Activated CD4-positive, alpha-beta T cell treated with anti-CD3 and anti-CD28 coated beads for 36 hours (primary cell): ENCODE measurements at regions of chr11 and their contacts with region 1.

Region 1: GRCh38 chr11:93084727-93085505 is 112.9 kb downstream of the SLC36A4 start:
- DNase-seq: no peak
- ATAC-seq: no peak
- H3K4me3 Mint-ChIP-seq: no peak overlapping the region
- H3K27ac Mint-ChIP-seq: no peak overlapping the region
- H3K4me1 Mint-ChIP-seq: no peaks in the 10 kb centered on the region
- H3K27me3 Mint-ChIP-seq: peaks cover 8% of the 10 kb centered on the region

Region 2: GRCh38 chr11:93225662-93226061 is 140.7 kb after region 1 on chr11:
- CTCF ChIA-PET with region 1: interaction called, 3 read pairs
- POLR2A ChIA-PET with region 1: no interaction called
- intact Hi-C with region 1: loop called in 1 of 2 experiments (anchors 5 kb)
- DNase-seq: no peak
- ATAC-seq: no peak
- H3K4me3 Mint-ChIP-seq: no peak overlapping the region
- H3K27ac Mint-ChIP-seq: no peak overlapping the region
- H3K4me1 Mint-ChIP-seq: no peaks in the 10 kb centered on the region
- H3K27me3 Mint-ChIP-seq: no peaks in the 10 kb centered on the region

Region 3: DNA sequence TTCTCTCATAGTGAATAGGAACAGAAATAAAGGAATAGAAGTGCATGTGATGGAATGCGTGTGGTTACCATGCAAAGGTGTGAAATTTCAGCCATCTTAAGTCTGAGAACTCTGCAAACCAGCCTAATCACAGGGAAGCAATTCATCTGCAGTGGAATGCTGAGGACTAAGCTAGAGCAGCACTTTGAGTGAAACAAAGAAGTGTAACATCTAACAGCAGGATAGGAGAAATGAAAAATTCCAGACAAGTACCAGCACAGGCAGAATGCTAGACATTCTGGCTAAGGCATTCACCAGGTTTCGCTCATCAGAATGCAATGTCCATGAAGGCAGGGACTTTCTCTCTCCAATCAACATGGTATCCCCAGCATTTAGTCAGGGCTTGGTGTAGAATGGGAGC is 154.0 kb after region 1 on chr11:
- CTCF ChIA-PET with region 1: no interaction called
- POLR2A ChIA-PET with region 1: no interaction called
- intact Hi-C with region 1: no loop called
- DNase-seq: no peak
- ATAC-seq: no peak
- H3K4me3 Mint-ChIP-seq: no peak overlapping the region
- H3K27ac Mint-ChIP-seq: no peak overlapping the region
- H3K4me1 Mint-ChIP-seq: no peaks in the 10 kb centered on the region
- H3K27me3 Mint-ChIP-seq: peaks cover 14% of the 10 kb centered on the region